Activated naive CD4-positive, alpha-beta T cell treated with anti-CD3 and anti-CD28 coated beads, Interleukin-2, amount 10 ng/mL, durations not matched to agents 7 days and 5 days (primary cell): ENCODE measurements at regions of chr12 and their contacts with region 1.

Region 1: GRCh38 chr12:122860346-122861090 is 25.3 kb downstream of the HIP1R start:
- DNase-seq: peak; percentile 87
- H3K4me3 Mint-ChIP-seq: no peak overlapping the region
- H3K27ac Mint-ChIP-seq: peak overlapping the region; percentile 76
- H3K4me1 Mint-ChIP-seq: peaks cover 6% of the 10 kb centered on the region
- H3K27me3 Mint-ChIP-seq: no peaks in the 10 kb centered on the region

Region 2: DNA sequence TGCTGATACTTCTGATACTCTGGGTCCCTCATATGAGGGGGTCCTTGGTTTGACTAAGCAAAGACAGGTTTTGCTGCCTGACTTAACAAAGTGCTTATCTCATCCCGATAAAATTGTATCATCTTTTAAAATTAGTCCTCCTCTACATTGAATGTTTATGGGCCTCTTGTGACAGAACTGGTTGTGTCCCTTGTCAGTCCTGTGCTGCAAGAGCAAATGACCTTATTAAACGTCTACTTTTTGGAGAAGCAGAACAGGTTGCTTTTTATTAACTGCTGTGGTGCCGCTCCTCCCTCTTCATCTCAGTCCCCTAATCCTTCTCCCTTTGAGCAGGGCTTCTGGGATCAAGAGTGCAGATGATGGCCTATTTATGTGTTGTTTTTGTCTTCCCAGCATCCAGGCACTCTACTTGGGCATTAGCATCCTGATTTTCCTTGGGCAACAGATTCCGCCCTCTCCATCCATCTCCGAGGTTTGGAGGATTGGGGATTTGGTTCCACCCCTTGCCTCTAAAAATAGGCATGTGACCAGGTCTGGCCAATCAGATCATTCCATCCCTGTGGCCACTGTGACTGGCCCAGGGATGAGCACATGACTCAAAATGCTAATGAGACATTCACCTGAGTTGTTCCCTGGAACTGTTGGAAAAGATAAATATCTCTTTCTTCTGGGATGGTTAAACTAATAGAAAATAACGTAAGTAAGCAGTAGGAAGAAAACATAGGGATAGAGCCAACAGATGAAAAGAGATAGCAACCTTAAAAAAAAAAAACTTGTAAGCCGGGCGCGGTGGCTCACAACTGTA is 110.7 kb before region 1 on chr12:
- CTCF ChIA-PET with region 1: no interaction called
- DNase-seq: no peak
- H3K4me3 Mint-ChIP-seq: no peak overlapping the region
- H3K27ac Mint-ChIP-seq: no peak overlapping the region
- H3K4me1 Mint-ChIP-seq: peaks cover 42% of the 10 kb centered on the region
- H3K27me3 Mint-ChIP-seq: no peaks in the 10 kb centered on the region

Region 3: GRCh38 chr12:122871851-122872780 is 11.6 kb after region 1 on chr12:
- CTCF ChIA-PET with region 1: interaction called, 21 read pairs
- DNase-seq: peak; percentile 64
- H3K4me3 Mint-ChIP-seq: peak overlapping the region; percentile 73
- H3K27ac Mint-ChIP-seq: peak overlapping the region; percentile 84
- H3K4me1 Mint-ChIP-seq: peaks cover 68% of the 10 kb centered on the region
- H3K27me3 Mint-ChIP-seq: no peaks in the 10 kb centered on the region

Region 4: GRCh38 chr12:122946690-122947341 is 86.3 kb after region 1 on chr12:
- CTCF ChIA-PET with region 1: interaction called, 106 read pairs
- DNase-seq: peak; percentile 83
- H3K4me3 Mint-ChIP-seq: no peak overlapping the region
- H3K27ac Mint-ChIP-seq: peak overlapping the region; percentile 70
- H3K4me1 Mint-ChIP-seq: peaks cover 42% of the 10 kb centered on the region
- H3K27me3 Mint-ChIP-seq: peaks cover 7% of the 10 kb centered on the region